ENCODE measurements at regions of chr12 and their contacts with region 1.

Region 1: DNA sequence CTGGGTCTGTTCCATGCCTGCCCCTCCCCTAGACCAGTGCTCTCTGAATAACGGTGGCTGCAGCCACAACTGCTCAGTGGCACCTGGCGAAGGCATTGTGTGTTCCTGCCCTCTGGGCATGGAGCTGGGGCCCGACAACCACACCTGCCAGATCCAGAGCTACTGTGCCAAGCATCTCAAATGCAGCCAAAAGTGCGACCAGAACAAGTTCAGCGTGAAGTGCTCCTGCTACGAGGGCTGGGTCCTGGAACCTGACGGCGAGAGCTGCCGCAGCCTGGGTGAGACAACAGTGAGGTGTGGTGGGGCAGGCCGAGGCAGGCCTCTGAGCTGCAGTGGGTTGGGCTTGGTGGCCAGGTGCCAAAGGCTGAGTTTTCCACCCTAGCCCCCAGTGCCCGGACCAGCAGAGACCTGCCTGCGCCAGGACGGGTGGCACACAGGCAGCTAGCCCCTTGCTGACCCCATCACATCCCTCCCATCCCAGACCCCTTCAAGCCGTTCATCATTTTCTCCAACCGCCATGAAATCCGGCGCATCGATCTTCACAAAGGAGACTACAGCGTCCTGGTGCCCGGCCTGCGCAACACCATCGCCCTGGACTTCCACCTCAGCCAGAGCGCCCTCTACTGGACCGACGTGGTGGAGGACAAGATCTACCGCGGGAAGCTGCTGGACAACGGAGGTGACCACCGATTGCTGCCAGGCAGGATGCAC is 28.2 kb upstream of the LRP1-AS start:
- DNase-seq: peak; percentile 86 to 90
- ATAC-seq: peak; percentile 61 to 77 (median 66)
- H3K4me3 ChIP-seq: no peak overlapping the region
- H3K27ac ChIP-seq: no peak overlapping the region
- H3K4me1 ChIP-seq: no peaks in the 10 kb centered on the region
- H3K27me3 ChIP-seq: no peaks in the 10 kb centered on the region
- CTCF ChIP-seq: peak; percentile 53

Region 2: DNA sequence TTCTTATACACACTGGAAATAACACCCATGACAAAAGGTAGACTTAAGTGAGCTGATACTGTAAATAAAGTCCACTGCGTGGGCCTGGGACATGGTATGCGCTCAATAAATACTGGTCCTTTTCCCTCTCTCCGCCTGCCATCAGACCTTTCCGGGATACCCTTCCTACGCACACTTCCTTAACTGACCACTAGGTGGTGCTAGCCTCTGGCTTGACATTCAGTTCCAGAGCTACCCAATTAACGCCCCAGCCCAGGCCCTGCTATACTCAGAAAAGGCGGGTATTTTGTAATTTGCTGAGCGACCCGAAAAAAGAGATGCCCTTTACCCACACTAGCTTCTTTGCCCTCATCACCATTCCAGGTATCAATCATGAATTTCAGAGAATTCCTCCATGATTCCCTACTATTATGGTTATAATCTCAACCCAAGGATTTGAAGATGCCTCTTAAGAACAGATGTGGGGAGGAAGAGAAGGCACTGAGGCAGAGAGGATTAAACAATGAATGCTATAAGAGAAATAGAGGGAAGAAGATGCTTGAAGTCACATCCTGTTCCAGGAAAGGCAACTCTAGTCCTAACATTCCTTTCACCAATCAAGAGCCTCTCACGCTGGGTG is 51.2 kb before region 1 on chr12:
- intact Hi-C with region 1: loop called in 1 of 2 experiments (anchors 2 kb)
- DNase-seq: peak in 1 of 2 donors; percentile 63
- ATAC-seq: peak; percentile 53 to 71 (median 64)
- H3K4me3 ChIP-seq: no peak overlapping the region
- H3K27ac ChIP-seq: no peak overlapping the region
- H3K4me1 ChIP-seq: peaks cover 8% of the 10 kb centered on the region
- H3K27me3 ChIP-seq: no peaks in the 10 kb centered on the region
- CTCF ChIP-seq: peak; percentile 98

Region 3: DNA sequence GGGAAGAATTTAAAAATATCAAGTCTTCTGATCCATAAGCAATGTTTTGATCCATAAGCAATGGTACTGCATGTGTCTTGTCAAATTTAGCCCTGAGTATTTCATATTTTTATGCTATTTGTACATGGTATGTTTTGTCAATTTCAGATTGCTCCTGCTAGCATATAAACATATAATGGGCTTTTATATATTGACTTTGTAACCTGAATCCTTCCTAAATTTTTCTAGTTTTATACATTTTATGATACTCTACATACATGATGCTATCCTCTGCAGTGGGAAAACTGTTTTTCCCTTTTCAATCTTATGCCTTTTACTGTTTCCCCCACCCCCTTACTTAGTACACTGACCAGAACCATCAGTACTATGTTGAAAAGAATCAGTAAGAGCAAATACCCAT is 180.2 kb after region 1 on chr12:
- intact Hi-C with region 1: no loop called
- DNase-seq: no peak
- ATAC-seq: no peak
- H3K4me3 ChIP-seq: no peak overlapping the region
- H3K27ac ChIP-seq: no peak overlapping the region
- H3K4me1 ChIP-seq: no peaks in the 10 kb centered on the region
- H3K27me3 ChIP-seq: no peaks in the 10 kb centered on the region
- CTCF ChIP-seq: no peak

Region 4: DNA sequence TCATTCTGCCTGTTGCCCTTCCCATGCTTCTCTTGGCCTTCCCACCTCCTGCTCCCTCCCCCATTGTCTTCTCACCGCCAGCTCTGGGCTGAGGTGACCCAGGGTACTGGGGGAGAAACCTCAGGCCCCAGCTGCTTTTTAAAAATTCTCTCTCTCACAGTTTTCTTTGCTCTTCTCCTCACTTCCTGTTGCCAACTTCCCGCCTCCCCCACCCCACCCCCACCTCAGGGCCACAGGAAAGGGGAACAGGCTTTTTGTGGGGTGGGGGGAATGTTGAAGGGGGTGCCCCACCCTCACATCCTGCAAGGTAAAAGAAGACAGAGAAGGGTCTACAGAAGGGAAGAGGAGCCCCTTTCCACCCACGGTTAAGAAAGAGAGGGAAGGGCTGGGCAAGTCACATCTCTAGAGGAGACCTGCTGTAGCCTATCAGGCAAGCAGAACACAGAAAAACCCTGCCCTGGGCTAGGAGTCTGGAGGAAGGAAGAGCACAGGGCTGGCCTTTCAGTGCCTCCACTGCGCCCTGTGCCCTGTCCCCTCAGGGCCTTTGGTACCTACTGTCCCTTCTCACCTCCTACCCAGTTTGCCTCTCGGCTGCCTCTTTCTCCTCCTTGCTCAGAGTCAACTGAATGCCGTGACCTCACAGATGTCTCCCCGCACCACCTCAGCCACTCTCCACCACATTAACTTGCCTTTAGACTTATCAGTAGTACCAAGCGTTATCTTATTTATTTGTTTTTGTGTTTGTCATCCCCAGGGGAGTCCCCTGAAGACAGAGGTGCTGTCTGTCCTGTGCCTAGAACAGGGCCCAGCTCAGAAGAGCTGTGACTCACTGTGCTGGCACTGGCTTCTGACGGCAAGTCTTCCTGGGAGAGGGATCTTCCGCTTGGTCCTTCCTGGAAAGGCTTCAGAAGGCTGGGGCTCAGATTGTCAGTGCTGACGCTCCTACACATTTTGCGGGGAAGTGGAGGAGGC is 302.4 kb after region 1 on chr12:
- intact Hi-C with region 1: no loop called
- DNase-seq: no peak
- ATAC-seq: no peak
- H3K4me3 ChIP-seq: peak overlapping the region; percentile 36
- H3K27ac ChIP-seq: peak overlapping the region; percentile 16
- H3K4me1 ChIP-seq: peaks cover 13% of the 10 kb centered on the region
- H3K27me3 ChIP-seq: peaks cover 0 to 45% (median 18%) of the 10 kb centered on the region in 3 donors
- CTCF ChIP-seq: no peak

Measured in psoas muscle (tissue), 8 donors.